CD8-positive, alpha-beta T cell (primary cell): ENCODE measurements at regions of chr17 and their contacts with region 1.

Region 1: GRCh38 chr17:43878260-43879175 is 28.8 kb downstream of the MPP2 start:
- DNase-seq: peak; percentile 32 to 79 (median 69)
- ATAC-seq: peak; percentile 88
- H3K4me3 ChIP-seq: no peak overlapping the region
- H3K4me3 Mint-ChIP-seq: no peak overlapping the region
- H3K27ac ChIP-seq: no peak overlapping the region
- H3K27ac Mint-ChIP-seq: no peak overlapping the region
- H3K4me1 ChIP-seq: no peaks in the 10 kb centered on the region
- H3K4me1 Mint-ChIP-seq: peaks cover 2% of the 10 kb centered on the region
- H3K27me3 ChIP-seq: no peaks in the 10 kb centered on the region
- H3K27me3 Mint-ChIP-seq: no peaks in the 10 kb centered on the region
- CTCF ChIP-seq: peak; percentile 91

Region 2: GRCh38 chr17:43868226-43868994 is 10.1 kb before region 1 on chr17:
- CTCF ChIA-PET with region 1: interaction called, 34 read pairs
- POLR2A ChIA-PET with region 1: no interaction called
- intact Hi-C with region 1: no loop called
- DNase-seq: no peak
- ATAC-seq: no peak
- H3K4me3 ChIP-seq: no peak overlapping the region
- H3K4me3 Mint-ChIP-seq: no peak overlapping the region
- H3K27ac ChIP-seq: no peak overlapping the region
- H3K27ac Mint-ChIP-seq: no peak overlapping the region
- H3K4me1 ChIP-seq: no peaks in the 10 kb centered on the region
- H3K4me1 Mint-ChIP-seq: no peaks in the 10 kb centered on the region
- H3K27me3 ChIP-seq: peaks cover 0 to 2% of the 10 kb centered on the region in 2 experiments
- H3K27me3 Mint-ChIP-seq: peaks cover 19% of the 10 kb centered on the region
- CTCF ChIP-seq: no peak

Region 3: GRCh38 chr17:43891851-43892646 is 13.5 kb after region 1 on chr17:
- CTCF ChIA-PET with region 1: interaction called, 60 read pairs
- POLR2A ChIA-PET with region 1: no interaction called
- intact Hi-C with region 1: no loop called
- DNase-seq: no peak
- ATAC-seq: no peak
- H3K4me3 ChIP-seq: no peak overlapping the region
- H3K4me3 Mint-ChIP-seq: no peak overlapping the region
- H3K27ac ChIP-seq: no peak overlapping the region
- H3K27ac Mint-ChIP-seq: no peak overlapping the region
- H3K4me1 ChIP-seq: no peaks in the 10 kb centered on the region
- H3K4me1 Mint-ChIP-seq: no peaks in the 10 kb centered on the region
- H3K27me3 ChIP-seq: no peaks in the 10 kb centered on the region
- H3K27me3 Mint-ChIP-seq: peaks cover 9% of the 10 kb centered on the region
- CTCF ChIP-seq: no peak

Region 4: DNA sequence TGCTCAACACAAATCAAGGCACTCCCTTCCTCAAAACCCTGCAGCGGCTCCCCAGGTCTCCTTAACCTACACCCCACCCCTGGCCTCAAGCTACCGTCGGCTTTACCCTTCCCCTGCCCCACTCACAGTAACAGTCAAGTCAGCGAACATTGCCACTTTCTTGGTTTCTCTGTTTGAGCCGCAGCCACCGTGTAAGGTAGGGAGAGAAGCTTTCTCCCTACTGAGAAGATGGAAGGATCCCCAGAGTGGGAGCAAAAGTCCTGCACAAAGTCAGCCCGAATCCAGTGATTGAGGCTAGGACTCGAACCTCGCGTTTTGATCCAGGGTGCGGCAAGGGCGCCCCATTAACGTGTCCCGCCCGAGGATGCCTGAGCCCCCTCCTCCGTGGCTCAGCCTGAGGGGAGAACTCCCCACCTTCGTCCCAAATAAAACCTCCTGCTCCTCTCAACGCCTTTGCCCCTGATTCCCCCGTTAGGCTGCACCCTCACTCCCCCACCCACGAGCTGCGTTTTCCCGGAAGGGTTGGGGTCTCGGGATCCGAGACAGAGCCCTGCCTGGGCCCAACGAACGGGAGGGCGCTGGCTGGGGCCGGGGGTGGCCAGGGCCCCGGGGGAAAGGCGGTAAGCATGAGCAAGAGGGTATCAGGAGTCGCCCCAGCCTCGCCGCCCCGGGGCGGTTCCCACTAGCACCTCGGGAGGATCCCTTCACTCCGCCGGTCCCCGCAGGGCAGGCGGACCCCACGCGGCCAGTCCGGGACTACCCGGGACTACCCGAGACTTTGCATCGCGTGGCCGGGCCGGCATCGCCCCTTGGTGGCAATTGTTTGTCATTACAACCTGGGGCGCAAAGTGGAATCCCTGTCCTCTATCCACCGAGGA is 116.0 kb after region 1 on chr17:
- CTCF ChIA-PET with region 1: interaction called, 26 read pairs
- POLR2A ChIA-PET with region 1: no interaction called
- intact Hi-C with region 1: loop called in 1 of 2 experiments (anchors 1 kb)
- DNase-seq: peak; percentile 31 to 75 (median 65)
- ATAC-seq: peak; percentile 98
- H3K4me3 ChIP-seq: peak overlapping the region in 1 of 2 experiments; percentile 32
- H3K4me3 Mint-ChIP-seq: no peak overlapping the region
- H3K27ac ChIP-seq: no peak overlapping the region
- H3K27ac Mint-ChIP-seq: no peak overlapping the region
- H3K4me1 ChIP-seq: peaks cover 5% of the 10 kb centered on the region
- H3K4me1 Mint-ChIP-seq: peaks cover 3% of the 10 kb centered on the region
- H3K27me3 ChIP-seq: peaks cover 7 to 9% of the 10 kb centered on the region in 2 experiments
- H3K27me3 Mint-ChIP-seq: peaks cover 19% of the 10 kb centered on the region
- CTCF ChIP-seq: peak; percentile 93

Region 5: DNA sequence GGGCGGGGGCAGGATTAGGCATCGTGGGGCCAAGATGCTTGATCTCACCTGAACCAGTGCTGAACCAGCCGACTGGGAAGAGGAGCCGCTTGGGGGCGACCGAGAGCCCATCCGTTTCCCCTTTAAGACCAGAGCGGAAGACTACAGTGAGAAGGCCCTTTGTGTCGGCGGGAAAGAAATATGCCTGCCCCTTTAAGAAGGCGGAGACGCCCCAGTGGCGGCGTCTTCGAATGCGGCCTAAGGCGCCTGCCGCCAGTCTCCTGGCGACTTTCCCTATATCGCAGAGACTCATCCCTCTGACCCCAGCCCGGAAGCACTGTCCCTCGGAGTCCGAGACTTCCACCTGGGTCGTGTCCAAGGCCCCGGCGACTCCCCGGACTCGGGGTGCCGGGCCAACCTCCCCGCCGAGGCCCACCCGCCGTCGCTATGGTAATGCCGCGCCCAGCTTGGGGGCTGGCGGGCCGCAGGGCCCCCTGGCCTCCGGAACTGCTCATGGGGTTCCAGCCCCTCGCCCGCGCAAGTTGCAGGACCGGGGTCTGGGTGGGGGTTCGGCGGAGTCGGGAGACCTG is 263.3 kb after region 1 on chr17 and contains the start of gene HROB:
- CTCF ChIA-PET with region 1: no interaction called
- POLR2A ChIA-PET with region 1: no interaction called
- intact Hi-C with region 1: no loop called
- DNase-seq: peak; percentile 95 to 99 (median 98)
- ATAC-seq: peak; percentile 91
- H3K4me3 ChIP-seq: peak within 1 kb of the TSS; percentile 62 to 80
- H3K4me3 Mint-ChIP-seq: peak within 1 kb of the TSS; percentile 84
- H3K27ac ChIP-seq: peak within 1 kb of the TSS; percentile 49 to 78
- H3K27ac Mint-ChIP-seq: peak within 1 kb of the TSS; percentile 49
- H3K4me1 ChIP-seq: peaks cover 11% of the 10 kb centered on the region
- H3K4me1 Mint-ChIP-seq: peaks cover 10% of the 10 kb centered on the region
- H3K27me3 ChIP-seq: peaks cover 0 to 14% of the 10 kb centered on the region in 2 experiments
- H3K27me3 Mint-ChIP-seq: peaks cover 10% of the 10 kb centered on the region
- CTCF ChIP-seq: peak; percentile 75
- total RNA-seq, gene HROB: 4.0 to 4.9 TPM